A673 (cell line): ENCODE measurements at regions of chr21 and their contacts with region 1.

Region 1: GRCh38 chr21:36504067-36505058 is 24.4 kb upstream of the CLDN14 start:
- DNase-seq: peak; percentile 72
- H3K4me3 ChIP-seq: no peak overlapping the region
- H3K27ac ChIP-seq: peak overlapping the region; percentile 29
- H3K4me1 ChIP-seq: peaks cover 37% of the 10 kb centered on the region
- H3K27me3 ChIP-seq: no peaks in the 10 kb centered on the region
- CTCF ChIP-seq: peak; percentile 86

Region 2: GRCh38 chr21:36403713-36404112 is 100.7 kb before region 1 on chr21:
- CTCF ChIA-PET with region 1: no interaction called
- POLR2A ChIA-PET with region 1: no interaction called
- intact Hi-C with region 1: no loop called
- DNase-seq: no peak
- H3K4me3 ChIP-seq: no peak overlapping the region
- H3K27ac ChIP-seq: no peak overlapping the region
- H3K4me1 ChIP-seq: no peaks in the 10 kb centered on the region
- H3K27me3 ChIP-seq: no peaks in the 10 kb centered on the region
- CTCF ChIP-seq: no peak

Region 3: DNA sequence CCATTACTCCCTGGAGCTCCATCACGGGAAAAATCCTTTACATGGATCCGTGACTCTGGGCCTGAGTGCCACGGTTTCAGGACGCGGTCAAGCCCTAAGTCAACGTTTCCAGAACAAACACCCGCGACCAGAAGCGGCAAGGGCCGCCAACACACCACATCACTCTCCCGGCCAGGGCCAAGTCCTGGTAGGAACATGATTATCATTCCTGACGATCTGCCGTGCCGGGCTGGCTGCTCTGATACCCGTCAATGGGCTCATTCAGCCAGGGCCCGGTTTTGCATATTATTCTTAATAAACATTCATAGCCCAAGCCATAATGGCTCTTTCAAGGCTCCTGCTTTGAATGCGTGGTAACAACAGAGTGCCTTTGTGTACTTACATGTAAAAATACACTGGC is 150.0 kb after region 1 on chr21:
- CTCF ChIA-PET with region 1: no interaction called
- POLR2A ChIA-PET with region 1: no interaction called
- intact Hi-C with region 1: no loop called
- DNase-seq: no peak
- H3K4me3 ChIP-seq: no peak overlapping the region
- H3K27ac ChIP-seq: no peak overlapping the region
- H3K4me1 ChIP-seq: no peaks in the 10 kb centered on the region
- H3K27me3 ChIP-seq: no peaks in the 10 kb centered on the region
- CTCF ChIP-seq: no peak

Region 4: GRCh38 chr21:36718951-36719501 is 214.7 kb after region 1 on chr21:
- CTCF ChIA-PET with region 1: no interaction called
- POLR2A ChIA-PET with region 1: no interaction called
- intact Hi-C with region 1: loop called (anchors 10 kb)
- DNase-seq: no peak
- H3K4me3 ChIP-seq: no peak overlapping the region
- H3K27ac ChIP-seq: peak overlapping the region; percentile 68
- H3K4me1 ChIP-seq: peaks cover 52% of the 10 kb centered on the region
- H3K27me3 ChIP-seq: no peaks in the 10 kb centered on the region
- CTCF ChIP-seq: no peak

Region 5: DNA sequence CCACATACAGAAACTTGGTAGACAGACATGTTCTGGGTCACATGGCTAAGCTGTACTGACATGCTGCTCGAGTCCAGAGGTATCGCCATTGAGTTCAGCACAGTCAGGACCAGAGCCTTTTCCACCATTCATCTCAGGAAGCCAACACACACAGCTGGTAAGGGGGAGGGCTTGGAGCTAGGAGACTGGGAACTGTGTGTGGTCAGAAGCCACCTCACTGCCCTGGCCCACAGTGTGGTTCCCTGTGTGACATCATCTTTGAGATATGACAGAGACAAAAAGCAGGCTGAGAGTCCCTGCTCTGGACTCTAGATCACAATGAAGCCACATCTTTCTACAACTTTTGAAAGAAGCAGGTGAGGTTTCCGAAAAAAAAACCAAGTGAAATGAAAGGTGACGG is 301.7 kb after region 1 on chr21:
- CTCF ChIA-PET with region 1: no interaction called
- POLR2A ChIA-PET with region 1: no interaction called
- intact Hi-C with region 1: no loop called
- DNase-seq: no peak
- H3K4me3 ChIP-seq: no peak overlapping the region
- H3K27ac ChIP-seq: no peak overlapping the region
- H3K4me1 ChIP-seq: no peaks in the 10 kb centered on the region
- H3K27me3 ChIP-seq: no peaks in the 10 kb centered on the region
- CTCF ChIP-seq: no peak